Activated CD4-positive, alpha-beta T cell treated with anti-CD3 and anti-CD28 coated beads, Interleukin-2, amount 10 ng/mL, durations not matched to agents 7 days and 5 days (primary cell): ENCODE measurements at regions of chr9 and their contacts with region 1.

Region 1: DNA sequence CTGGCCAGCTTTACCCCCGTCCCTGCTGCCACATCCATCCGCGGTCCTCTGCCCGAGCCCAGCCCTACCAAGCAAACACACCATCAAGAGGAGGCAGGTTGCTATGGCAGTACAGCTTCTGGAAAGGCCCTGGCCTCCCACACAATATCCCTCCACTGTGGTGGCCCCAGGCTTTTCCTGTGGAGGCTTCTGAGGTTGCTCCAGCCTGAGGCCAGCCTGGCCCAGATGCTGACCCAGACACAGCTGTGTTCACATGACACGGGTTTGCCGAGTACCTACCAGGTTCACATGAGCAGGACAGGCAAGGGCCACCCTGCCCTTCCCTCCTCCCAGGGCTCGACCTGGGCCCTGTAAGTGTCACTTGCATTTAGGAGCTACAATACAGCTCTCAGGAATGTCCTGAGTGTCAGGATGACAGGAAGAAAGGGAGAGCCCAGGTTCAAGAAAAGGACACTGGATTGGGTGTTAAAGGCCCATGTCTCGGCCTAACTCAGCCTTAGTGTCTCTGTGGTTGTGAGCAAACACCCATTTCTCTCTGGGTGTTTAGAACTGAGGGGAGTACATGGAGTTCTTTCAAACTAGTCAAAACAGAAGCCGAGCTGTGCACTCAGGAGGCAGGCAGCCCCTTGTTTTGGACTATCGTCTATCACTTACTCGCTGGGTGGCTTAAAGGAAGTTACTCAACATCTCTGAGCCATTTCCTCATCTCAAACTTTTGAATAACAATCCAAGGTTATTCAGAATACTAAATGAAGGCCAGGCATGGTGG is 40.2 kb downstream of the NAIF1 start:
- DNase-seq: peak; percentile 61
- H3K4me3 Mint-ChIP-seq: peak overlapping the region; percentile 81
- H3K27ac Mint-ChIP-seq: peak overlapping the region; percentile 98
- H3K4me1 Mint-ChIP-seq: peaks cover 92% of the 10 kb centered on the region
- H3K27me3 Mint-ChIP-seq: no peaks in the 10 kb centered on the region

Region 2: DNA sequence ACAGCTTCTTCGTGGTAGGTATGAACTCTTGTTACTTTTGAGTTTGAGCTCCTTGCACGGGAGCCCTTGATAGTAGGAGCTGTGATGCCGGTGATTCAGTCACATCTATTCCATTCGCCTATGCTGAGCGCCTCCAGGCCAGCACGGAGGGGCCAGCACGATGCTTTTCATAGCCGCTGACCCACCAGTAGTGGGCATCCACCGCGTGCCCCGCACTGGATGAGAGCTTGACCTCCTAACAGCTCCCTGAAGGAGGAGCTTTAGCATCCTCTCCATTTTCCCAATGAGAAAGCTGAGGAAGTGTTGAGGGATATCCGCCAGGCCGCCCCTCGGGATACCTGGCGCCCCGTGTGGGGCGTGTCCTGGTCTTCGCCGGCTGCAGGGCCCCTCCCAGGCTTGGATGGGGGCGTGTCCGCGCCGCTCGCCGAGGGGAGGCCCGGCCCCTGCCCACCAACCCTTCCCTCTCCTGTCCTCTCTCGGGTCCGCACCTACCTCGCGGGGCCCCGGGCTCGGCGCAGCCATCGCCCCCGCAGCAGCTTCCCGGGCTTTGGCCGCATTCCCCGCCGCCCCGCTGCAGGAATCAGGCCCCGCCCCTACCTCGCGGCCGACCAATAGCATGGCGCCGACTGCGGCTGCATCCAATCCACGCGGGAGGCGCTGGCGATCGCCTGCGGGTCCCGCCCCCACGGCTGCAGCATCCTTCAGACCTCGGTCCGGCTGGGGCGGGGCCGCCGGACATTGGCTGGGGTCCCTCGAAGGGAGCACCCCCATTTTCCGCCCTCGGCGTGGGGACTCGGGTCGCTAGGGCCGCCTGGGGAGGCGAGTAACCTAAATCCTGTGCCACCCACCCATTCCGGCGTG is 96.5 kb before region 1 on chr9 and contains the start of gene PIP5KL1:
- CTCF ChIA-PET with region 1: no interaction called
- POLR2A ChIA-PET with region 1: no interaction called
- DNase-seq: peak; percentile 77
- H3K4me3 Mint-ChIP-seq: peak within 1 kb of the TSS; percentile 64
- H3K27ac Mint-ChIP-seq: peak within 1 kb of the TSS; percentile 68
- H3K4me1 Mint-ChIP-seq: peaks cover 43% of the 10 kb centered on the region
- H3K27me3 Mint-ChIP-seq: peaks cover 9% of the 10 kb centered on the region
- total RNA-seq, gene PIP5KL1: 2.5 to 4.1 TPM

Region 3: DNA sequence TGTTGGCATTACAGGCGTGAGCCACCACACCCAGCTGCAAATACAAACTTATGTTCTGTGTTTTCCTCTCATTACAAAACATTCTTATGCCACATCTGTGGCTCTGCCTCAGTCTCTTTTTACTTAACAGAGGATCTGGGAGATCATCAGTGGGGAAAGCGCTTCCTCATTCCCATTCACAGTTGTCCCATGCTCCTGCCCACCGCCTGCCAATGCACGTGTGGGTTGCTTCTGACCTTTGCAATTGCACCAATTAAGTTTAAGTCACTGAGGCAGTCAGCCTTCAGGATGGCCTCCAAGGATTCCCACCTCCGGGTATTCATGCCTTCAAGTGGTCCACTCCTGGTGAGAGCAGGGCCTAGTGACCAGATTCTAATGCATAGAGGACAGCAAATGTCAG is 11.3 kb before region 1 on chr9:
- CTCF ChIA-PET with region 1: interaction called, 14 read pairs
- POLR2A ChIA-PET with region 1: no interaction called
- DNase-seq: no peak
- H3K4me3 Mint-ChIP-seq: no peak overlapping the region
- H3K27ac Mint-ChIP-seq: no peak overlapping the region
- H3K4me1 Mint-ChIP-seq: peaks cover 32% of the 10 kb centered on the region
- H3K27me3 Mint-ChIP-seq: no peaks in the 10 kb centered on the region